Adrenal gland (tissue), 19 donors: ENCODE measurements at regions of chr4 and their contacts with region 1.

Region 1: DNA sequence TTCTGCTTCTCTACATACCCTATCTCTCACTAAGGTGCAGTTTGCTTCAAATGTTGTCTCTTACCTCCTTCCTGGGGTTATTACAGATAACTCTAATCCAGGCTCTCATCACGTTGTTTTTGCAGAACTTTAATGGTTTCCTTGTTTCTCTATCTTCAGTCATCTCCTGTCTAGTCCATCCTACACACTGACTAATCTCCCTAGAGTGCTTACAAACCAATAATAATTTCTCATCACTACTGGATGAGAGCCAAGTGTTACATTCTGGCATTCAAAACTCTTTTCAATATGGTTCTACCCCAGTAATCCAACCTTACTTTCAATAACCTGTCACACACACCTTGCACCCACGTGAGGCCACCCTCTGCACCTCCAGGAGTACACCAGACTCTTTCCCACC is 86.1 kb downstream of the SYNPO2 start:
- DNase-seq: no peak
- H3K4me3 ChIP-seq: no peak overlapping the region
- H3K27ac ChIP-seq: no peak overlapping the region
- H3K4me1 ChIP-seq: no peaks in the 10 kb centered on the region
- H3K27me3 ChIP-seq: no peaks in the 10 kb centered on the region
- CTCF ChIP-seq: no peak
- POLR2A ChIP-seq: no peak

Region 2: GRCh38 chr4:118729287-118730286 is 245.2 kb before region 1 on chr4:
- intact Hi-C with region 1: loop called in 1 of 2 experiments (anchors 10 kb)
- DNase-seq: no peak
- H3K4me3 ChIP-seq: no peak overlapping the region
- H3K27ac ChIP-seq: peak overlapping the region in 2 of 5 donors; percentile 15 to 45
- H3K4me1 ChIP-seq: no peaks in the 10 kb centered on the region
- H3K27me3 ChIP-seq: no peaks in the 10 kb centered on the region
- CTCF ChIP-seq: no peak
- POLR2A ChIP-seq: no peak